ENCODE measurements at regions of chr5 and their contacts with region 1.

Region 1: DNA sequence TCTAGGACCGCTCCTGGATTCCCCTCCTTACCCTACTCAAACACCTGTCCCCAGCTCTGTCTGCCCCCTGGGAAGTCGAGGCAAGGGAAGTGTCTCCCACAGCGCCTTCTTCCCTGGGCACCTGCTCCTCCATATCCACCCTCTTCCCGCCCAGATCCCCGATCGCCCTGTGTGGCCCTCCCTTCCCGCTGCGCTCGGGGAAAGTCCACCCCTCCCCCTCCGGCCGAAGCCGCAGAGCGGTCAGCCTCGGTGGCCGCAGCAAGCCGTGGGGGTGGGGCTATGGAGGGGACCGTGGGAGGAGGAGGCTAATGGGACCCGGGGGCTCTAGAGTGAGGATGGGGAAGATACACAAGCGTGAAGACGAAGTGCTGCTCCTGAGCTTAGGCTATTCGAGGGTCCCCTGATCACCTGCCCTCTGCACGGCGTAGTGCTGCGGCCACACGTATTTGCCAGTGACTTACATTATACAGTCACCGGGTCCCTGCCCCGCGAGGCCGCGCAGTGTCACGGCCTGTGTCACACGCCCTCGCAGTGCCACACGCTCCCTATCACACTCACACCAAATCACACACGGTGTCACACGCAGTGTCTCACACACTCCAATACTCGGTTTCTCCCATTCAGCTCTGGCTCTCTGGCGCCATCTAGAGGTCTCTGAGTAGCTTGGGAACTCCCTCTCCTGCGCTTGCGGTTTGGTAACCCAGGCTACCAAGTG is 658 bp upstream of the PCDH1 start:
- DNase-seq: peak; percentile 84
- CTCF ChIP-seq: peak; percentile 89

Region 2: DNA sequence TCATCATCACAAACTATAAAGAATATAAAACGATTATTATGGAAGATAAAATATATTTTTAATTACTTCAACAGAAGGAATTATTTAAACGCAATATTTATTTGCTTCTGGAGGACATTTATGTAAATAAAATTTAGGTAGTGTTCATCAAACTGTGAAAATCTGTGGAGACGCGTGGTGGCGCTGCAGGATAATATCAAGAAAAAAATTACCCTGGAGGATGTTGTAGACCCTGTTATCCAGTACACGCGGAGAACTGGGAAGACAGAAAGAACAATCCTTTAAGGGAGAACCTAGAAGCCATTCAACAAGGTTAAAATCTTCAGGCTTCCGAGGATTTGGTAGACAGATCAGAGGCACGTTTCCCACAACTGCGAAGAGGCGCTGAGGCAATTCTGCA is 670.4 kb before region 1 on chr5 and contains the start of gene PCDHB12:
- CTCF ChIA-PET with region 1: no interaction called
- POLR2A ChIA-PET with region 1: no interaction called
- DNase-seq: no peak
- CTCF ChIP-seq: no peak

Region 3: GRCh38 chr5:141529002-141529401 is 349.9 kb before region 1 on chr5:
- CTCF ChIA-PET with region 1: no interaction called
- POLR2A ChIA-PET with region 1: no interaction called
- DNase-seq: peak; percentile 36
- CTCF ChIP-seq: no peak

Region 4: GRCh38 chr5:141664732-141665461 is 214.0 kb before region 1 on chr5:
- CTCF ChIA-PET with region 1: interaction called, 19 read pairs
- POLR2A ChIA-PET with region 1: no interaction called
- DNase-seq: peak; percentile 88
- CTCF ChIP-seq: peak; percentile 86

Region 5: GRCh38 chr5:141811287-141812155 is 67.3 kb before region 1 on chr5:
- CTCF ChIA-PET with region 1: interaction called, 17 read pairs
- POLR2A ChIA-PET with region 1: no interaction called
- DNase-seq: peak; percentile 72
- CTCF ChIP-seq: peak; percentile 50

Region 6: DNA sequence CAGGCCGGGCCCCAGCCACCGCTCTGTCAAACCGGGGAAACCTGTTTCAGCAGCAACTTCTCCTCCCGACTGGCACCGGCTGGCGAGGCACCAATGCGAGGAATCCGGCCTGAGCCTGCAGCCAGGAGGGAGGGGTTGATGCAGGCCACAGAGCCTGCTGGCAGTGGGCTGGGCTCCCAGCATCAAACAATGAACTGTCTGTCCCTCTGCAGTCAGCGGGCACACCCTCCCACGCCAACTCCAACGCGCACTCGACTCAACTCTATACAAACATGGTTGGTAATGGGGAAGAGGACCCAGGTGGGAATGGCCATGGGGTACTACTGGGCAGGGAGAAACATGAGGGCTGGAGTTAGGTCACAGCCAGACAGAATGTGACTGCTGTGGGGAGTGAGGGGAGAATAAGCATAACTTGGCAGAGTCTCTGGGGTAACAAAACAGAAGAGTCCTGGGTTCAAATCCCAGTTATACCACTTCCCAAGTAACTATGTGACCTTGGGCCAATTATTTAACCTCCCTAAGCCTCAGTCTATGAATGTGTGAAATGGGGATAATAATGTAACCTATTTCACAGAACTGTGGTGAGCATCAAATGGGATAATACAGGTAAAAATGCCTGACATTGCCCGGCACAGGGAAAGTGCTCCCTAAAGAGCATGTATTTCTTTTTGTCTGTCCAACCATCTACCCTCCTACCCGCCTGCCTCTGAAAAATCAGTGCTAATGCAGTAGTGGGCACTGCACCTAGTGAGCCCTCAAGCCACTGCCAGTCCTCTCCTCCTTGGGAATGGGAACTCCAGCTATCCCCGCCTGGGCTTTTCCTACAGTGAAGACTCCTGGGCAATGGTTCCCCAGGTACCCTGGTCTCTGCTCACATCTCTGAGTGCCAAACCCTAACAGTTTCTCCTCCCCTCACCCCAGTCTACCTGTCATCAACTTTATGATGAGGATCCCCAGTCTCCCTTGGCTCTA is 12.4 kb before region 1 on chr5:
- CTCF ChIA-PET with region 1: interaction called, 23 read pairs
- POLR2A ChIA-PET with region 1: no interaction called
- DNase-seq: no peak
- CTCF ChIP-seq: no peak

Region 7: GRCh38 chr5:141914199-141914743 is 35.4 kb after region 1 on chr5:
- CTCF ChIA-PET with region 1: interaction called, 23 read pairs
- POLR2A ChIA-PET with region 1: no interaction called
- DNase-seq: peak; percentile 66
- CTCF ChIP-seq: peak; percentile 29